ENCODE measurements at regions of chr13 and their contacts with region 1.

Region 1: GRCh38 chr13:113176280-113176679 is 17.8 kb downstream of the PROZ start:
- DNase-seq: peak in 1 of 9 donors; percentile 36
- ATAC-seq: peak; percentile 91
- H3K4me3 ChIP-seq: no peak overlapping the region
- H3K4me3 Mint-ChIP-seq: peak overlapping the region in 9 of 10 donors; percentile 1 to 68 (median 43)
- H3K27ac ChIP-seq: peak overlapping the region; percentile 46
- H3K27ac Mint-ChIP-seq: peak overlapping the region; percentile 86 to 94 (median 92)
- H3K4me1 ChIP-seq: peaks cover 7 to 46% of the 10 kb centered on the region in 2 donors
- H3K4me1 Mint-ChIP-seq: peaks cover 5 to 53% (median 9%) of the 10 kb centered on the region in 7 donors
- H3K27me3 ChIP-seq: no peaks in the 10 kb centered on the region
- H3K27me3 Mint-ChIP-seq: no peaks in the 10 kb centered on the region

Region 2: GRCh38 chr13:113186061-113186900 is 10.0 kb after region 1 on chr13:
- CTCF ChIA-PET with region 1: no interaction called
- POLR2A ChIA-PET with region 1: interaction called, 13 read pairs
- intact Hi-C with region 1: no loop called
- DNase-seq: no peak
- ATAC-seq: peak; percentile 62
- H3K4me3 ChIP-seq: no peak overlapping the region
- H3K4me3 Mint-ChIP-seq: peak overlapping the region in 5 of 10 donors; percentile 10 to 59 (median 57)
- H3K27ac ChIP-seq: no peak overlapping the region
- H3K27ac Mint-ChIP-seq: peak overlapping the region in 8 of 9 donors; percentile 40 to 94 (median 80)
- H3K4me1 ChIP-seq: peaks cover 6 to 49% of the 10 kb centered on the region in 2 donors
- H3K4me1 Mint-ChIP-seq: peaks cover 13 to 49% (median 14%) of the 10 kb centered on the region in 7 donors
- H3K27me3 ChIP-seq: no peaks in the 10 kb centered on the region
- H3K27me3 Mint-ChIP-seq: no peaks in the 10 kb centered on the region